ENCODE measurements at regions of chr10 and their contacts with region 1.

Region 1: GRCh38 chr10:88880282-88881076 is 434 bp downstream of the STAMBPL1 start:
- DNase-seq: peak; percentile 92
- ATAC-seq: peak; percentile 68
- H3K4me3 ChIP-seq: peak overlapping the region; percentile 50 to 84 (median 71)
- H3K4me3 Mint-ChIP-seq: peak overlapping the region; percentile 96
- H3K27ac ChIP-seq: peak overlapping the region; percentile 88 to 91
- H3K27ac Mint-ChIP-seq: peak overlapping the region; percentile 97
- H3K4me1 ChIP-seq: peaks cover 25 to 40% of the 10 kb centered on the region in 2 donors
- H3K4me1 Mint-ChIP-seq: peaks cover 57% of the 10 kb centered on the region
- H3K27me3 ChIP-seq: no peaks in the 10 kb centered on the region
- H3K27me3 Mint-ChIP-seq: no peaks in the 10 kb centered on the region
- CTCF ChIP-seq: peak; percentile 30

Region 2: GRCh38 chr10:88901206-88901983 is 20.9 kb after region 1 on chr10:
- CTCF ChIA-PET with region 1: interaction called, 29 read pairs
- POLR2A ChIA-PET with region 1: interaction called, 47 read pairs
- intact Hi-C with region 1: loop called (anchors 1 kb)
- DNase-seq: peak; percentile 81
- ATAC-seq: peak; percentile 85
- H3K4me3 ChIP-seq: peak overlapping the region in 1 of 5 experiments; percentile 17
- H3K4me3 Mint-ChIP-seq: peak overlapping the region; percentile 74
- H3K27ac ChIP-seq: peak overlapping the region; percentile 78 to 81
- H3K27ac Mint-ChIP-seq: peak overlapping the region; percentile 98
- H3K4me1 ChIP-seq: peaks cover 38 to 64% of the 10 kb centered on the region in 2 donors
- H3K4me1 Mint-ChIP-seq: peaks cover 58% of the 10 kb centered on the region
- H3K27me3 ChIP-seq: no peaks in the 10 kb centered on the region
- H3K27me3 Mint-ChIP-seq: no peaks in the 10 kb centered on the region
- CTCF ChIP-seq: no peak

Region 3: GRCh38 chr10:88915781-88916180 is 35.3 kb after region 1 on chr10:
- CTCF ChIA-PET with region 1: no interaction called
- POLR2A ChIA-PET with region 1: interaction called, 3 read pairs
- intact Hi-C with region 1: loop called (anchors 5 kb)
- DNase-seq: no peak
- ATAC-seq: no peak
- H3K4me3 ChIP-seq: no peak overlapping the region
- H3K4me3 Mint-ChIP-seq: no peak overlapping the region
- H3K27ac ChIP-seq: no peak overlapping the region
- H3K27ac Mint-ChIP-seq: no peak overlapping the region
- H3K4me1 ChIP-seq: no peaks in the 10 kb centered on the region
- H3K4me1 Mint-ChIP-seq: no peaks in the 10 kb centered on the region
- H3K27me3 ChIP-seq: no peaks in the 10 kb centered on the region
- H3K27me3 Mint-ChIP-seq: no peaks in the 10 kb centered on the region
- CTCF ChIP-seq: no peak

Region 4: GRCh38 chr10:88990384-88991160 is 110.1 kb after region 1 on chr10 and contains the start of gene FAS:
- CTCF ChIA-PET with region 1: interaction called, 3 read pairs
- POLR2A ChIA-PET with region 1: no interaction called
- intact Hi-C with region 1: loop called (anchors 1 kb)
- DNase-seq: peak; percentile 87
- ATAC-seq: peak; percentile 65
- H3K4me3 ChIP-seq: peak within 1 kb of the TSS; percentile 73 to 95 (median 86)
- H3K4me3 Mint-ChIP-seq: peak within 1 kb of the TSS; percentile 98
- H3K27ac ChIP-seq: peak within 1 kb of the TSS; percentile 63 to 80
- H3K27ac Mint-ChIP-seq: peak within 1 kb of the TSS; percentile 83
- H3K4me1 ChIP-seq: peaks cover 17 to 25% of the 10 kb centered on the region in 2 donors
- H3K4me1 Mint-ChIP-seq: peaks cover 43% of the 10 kb centered on the region
- H3K27me3 ChIP-seq: no peaks in the 10 kb centered on the region
- H3K27me3 Mint-ChIP-seq: no peaks in the 10 kb centered on the region
- CTCF ChIP-seq: peak; percentile 7
- total RNA-seq, gene FAS: 11.5 and 13.7 TPM in 2 replicates

Region 5: GRCh38 chr10:89251409-89252224 is 371.1 kb after region 1 on chr10 and contains the start of gene LIPA:
- CTCF ChIA-PET with region 1: no interaction called
- POLR2A ChIA-PET with region 1: no interaction called
- intact Hi-C with region 1: no loop called
- DNase-seq: peak; percentile 99
- ATAC-seq: peak; percentile 95
- H3K4me3 ChIP-seq: peak within 1 kb of the TSS; percentile 65 to 92 (median 84)
- H3K4me3 Mint-ChIP-seq: peak within 1 kb of the TSS; percentile 94
- H3K27ac ChIP-seq: peak within 1 kb of the TSS; percentile 48 to 71
- H3K27ac Mint-ChIP-seq: peak within 1 kb of the TSS; percentile 85
- H3K4me1 ChIP-seq: peaks cover 18% of the 10 kb centered on the region in 2 donors
- H3K4me1 Mint-ChIP-seq: peaks cover 24% of the 10 kb centered on the region
- H3K27me3 ChIP-seq: no peaks in the 10 kb centered on the region
- H3K27me3 Mint-ChIP-seq: no peaks in the 10 kb centered on the region
- CTCF ChIP-seq: no peak
- total RNA-seq, gene LIPA: 36.5 and 38.9 TPM in 2 replicates

Measured in B cell (primary cell).